ENCODE measurements at regions of chr5 and their contacts with region 1.

Region 1: GRCh38 chr5:55936100-55936693 is 58.6 kb downstream of the IL6ST start:
- DNase-seq: peak; percentile 83
- ATAC-seq: peak; percentile 80 to 86

Region 2: GRCh38 chr5:56012281-56012963 is 76.2 kb after region 1 on chr5:
- intact Hi-C with region 1: no loop called
- DNase-seq: no peak
- ATAC-seq: peak in 1 of 2 donors; percentile 89

Region 3: DNA sequence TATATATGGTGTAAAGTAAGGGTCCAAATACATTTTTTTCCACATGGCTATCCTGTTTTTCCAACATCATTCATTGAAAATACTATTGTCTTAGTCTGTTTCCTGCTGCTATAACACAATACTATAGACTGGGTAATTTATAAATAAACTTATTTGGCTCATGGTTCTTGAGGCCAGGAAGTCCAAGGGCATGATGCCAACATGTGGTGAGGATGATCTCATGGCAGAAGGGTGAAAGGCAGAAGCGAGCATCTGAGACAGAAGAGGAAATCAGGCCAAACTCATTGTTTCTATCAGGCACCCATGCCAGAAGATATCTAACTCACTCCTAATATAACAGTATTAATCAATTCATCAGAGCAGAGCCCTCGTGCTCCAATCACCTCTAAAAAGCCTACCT is 254.3 kb after region 1 on chr5:
- intact Hi-C with region 1: loop called in 1 of 2 experiments (anchors 5 kb)
- DNase-seq: peak; percentile 35
- ATAC-seq: peak in 1 of 2 donors; percentile 51

Measured in left cardiac atrium (tissue), 4 donors.